Activated naive CD4-positive, alpha-beta T cell treated with anti-CD3 and anti-CD28 coated beads for 36 hours (primary cell): ENCODE measurements at regions of chr11 and their contacts with region 1.

Region 1: DNA sequence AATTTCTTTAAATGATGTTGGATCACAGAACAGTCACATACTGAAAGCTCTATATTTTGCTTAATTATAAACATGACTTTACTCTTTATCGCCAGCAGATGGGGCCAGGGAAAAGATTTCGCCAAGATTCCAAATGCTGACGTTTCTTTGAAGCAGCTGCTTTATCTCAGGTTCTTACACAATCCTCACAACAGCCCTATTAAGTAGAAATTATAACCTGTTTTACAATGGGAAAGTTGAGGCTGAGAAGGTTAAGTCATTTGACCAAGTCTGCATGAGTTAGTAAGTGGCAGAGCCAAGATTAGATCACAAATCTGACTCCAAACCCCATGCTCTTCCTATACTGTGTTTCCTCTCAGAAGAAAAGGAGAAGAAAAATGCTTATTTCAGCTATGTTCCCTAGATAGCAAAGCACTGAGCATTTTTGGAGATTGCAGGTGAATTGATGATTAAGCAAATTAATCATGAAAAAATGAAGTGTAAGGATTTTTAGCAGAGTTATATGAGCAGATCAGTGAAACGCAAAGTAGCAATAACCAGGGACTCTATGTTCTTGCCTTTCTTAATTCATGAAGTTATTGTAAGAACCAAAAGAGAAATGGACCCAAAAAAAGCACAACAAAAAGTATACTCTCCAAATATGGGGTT is 79.0 kb downstream of the AASDHPPT start:
- DNase-seq: peak; percentile 20
- H3K4me3 Mint-ChIP-seq: no peak overlapping the region
- H3K27ac Mint-ChIP-seq: no peak overlapping the region
- H3K4me1 Mint-ChIP-seq: no peaks in the 10 kb centered on the region
- H3K27me3 Mint-ChIP-seq: peaks cover 11% of the 10 kb centered on the region

Region 2: DNA sequence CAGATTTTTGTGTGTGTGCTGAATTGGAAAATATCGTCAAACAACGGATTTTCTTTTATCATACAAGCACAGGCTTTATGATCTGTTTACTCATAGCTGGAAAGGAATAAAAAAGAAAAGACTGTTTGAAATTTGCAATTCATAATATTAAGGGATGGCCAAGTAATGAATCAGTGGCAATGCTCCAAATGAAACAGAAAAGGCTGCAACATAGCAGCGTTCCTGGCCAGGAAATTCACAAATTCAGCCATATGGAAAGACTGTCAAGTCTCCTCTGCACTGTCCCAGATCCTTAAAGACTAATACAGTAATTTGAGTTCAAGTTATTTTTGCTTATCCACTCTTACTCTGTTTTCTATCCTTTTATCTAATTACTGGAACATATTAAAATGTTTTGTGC is 232.6 kb before region 1 on chr11:
- CTCF ChIA-PET with region 1: no interaction called
- intact Hi-C with region 1: no loop called
- DNase-seq: no peak
- H3K4me3 Mint-ChIP-seq: no peak overlapping the region
- H3K27ac Mint-ChIP-seq: no peak overlapping the region
- H3K4me1 Mint-ChIP-seq: no peaks in the 10 kb centered on the region
- H3K27me3 Mint-ChIP-seq: peaks cover 2% of the 10 kb centered on the region

Region 3: DNA sequence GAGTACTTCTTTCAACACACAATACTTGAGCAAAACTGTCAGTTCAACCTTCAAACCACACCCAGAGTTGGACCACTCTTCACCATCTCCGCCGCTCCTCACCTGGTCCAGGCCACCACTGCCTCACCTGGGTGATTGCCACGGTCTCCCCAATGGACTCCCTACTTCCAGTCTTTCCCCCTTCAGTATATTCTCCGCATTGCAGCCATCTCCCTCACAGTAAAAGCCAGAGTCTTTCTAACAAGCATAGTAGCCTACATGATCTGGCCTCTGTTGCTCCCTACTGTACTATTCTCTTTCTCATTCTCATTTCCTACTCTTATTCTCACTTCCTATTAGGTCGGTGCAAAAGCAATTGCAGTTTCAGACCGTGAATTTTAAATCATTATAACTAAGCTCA is 50.4 kb before region 1 on chr11:
- CTCF ChIA-PET with region 1: no interaction called
- intact Hi-C with region 1: no loop called
- DNase-seq: no peak
- H3K4me3 Mint-ChIP-seq: no peak overlapping the region
- H3K27ac Mint-ChIP-seq: no peak overlapping the region
- H3K4me1 Mint-ChIP-seq: no peaks in the 10 kb centered on the region
- H3K27me3 Mint-ChIP-seq: peaks cover 3% of the 10 kb centered on the region

Region 4: GRCh38 chr11:106172378-106172991 is 16.1 kb after region 1 on chr11:
- CTCF ChIA-PET with region 1: no interaction called
- intact Hi-C with region 1: no loop called
- DNase-seq: no peak
- H3K4me3 Mint-ChIP-seq: no peak overlapping the region
- H3K27ac Mint-ChIP-seq: no peak overlapping the region
- H3K4me1 Mint-ChIP-seq: no peaks in the 10 kb centered on the region
- H3K27me3 Mint-ChIP-seq: peaks cover 6% of the 10 kb centered on the region

Region 5: DNA sequence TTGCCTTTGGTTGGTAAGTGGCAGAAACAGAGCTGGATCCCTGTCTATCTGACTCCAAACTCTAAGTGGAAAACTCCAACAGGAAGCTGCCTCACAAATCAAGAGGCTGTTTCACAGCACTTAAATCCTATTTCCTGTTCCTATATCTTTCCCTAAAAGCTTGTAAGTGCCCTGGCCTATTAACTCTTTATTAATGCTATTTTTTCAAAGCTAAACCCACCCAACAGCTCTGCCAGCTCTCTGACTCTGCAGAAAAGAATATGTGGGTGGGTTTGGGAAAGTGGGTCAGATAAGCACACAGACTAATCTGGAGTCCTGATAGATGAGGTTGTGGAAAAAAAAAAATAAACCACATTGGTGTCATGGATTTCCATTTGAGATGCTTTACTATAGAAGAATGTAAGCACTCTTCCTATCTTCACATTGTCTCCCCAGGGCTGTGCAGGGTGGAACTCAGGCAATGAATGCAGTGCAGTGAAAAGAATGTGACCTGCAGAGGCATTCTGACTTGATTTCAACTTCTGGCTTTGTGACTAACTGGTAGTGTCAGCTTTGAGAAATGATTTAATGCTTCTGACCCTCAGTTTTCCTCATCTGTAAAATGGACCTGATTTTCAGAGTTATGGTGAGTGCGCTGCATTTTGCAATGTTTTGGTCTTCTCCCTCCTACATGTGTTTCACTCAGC is 46.7 kb after region 1 on chr11:
- CTCF ChIA-PET with region 1: no interaction called
- intact Hi-C with region 1: no loop called
- DNase-seq: no peak
- H3K4me3 Mint-ChIP-seq: no peak overlapping the region
- H3K27ac Mint-ChIP-seq: no peak overlapping the region
- H3K4me1 Mint-ChIP-seq: no peaks in the 10 kb centered on the region
- H3K27me3 Mint-ChIP-seq: no peaks in the 10 kb centered on the region

Region 6: GRCh38 chr11:107017433-107018227 is 861.2 kb after region 1 on chr11:
- CTCF ChIA-PET with region 1: no interaction called
- intact Hi-C with region 1: loop called (anchors 5 kb)
- DNase-seq: peak; percentile 16
- H3K4me3 Mint-ChIP-seq: peak overlapping the region; percentile 24
- H3K27ac Mint-ChIP-seq: no peak overlapping the region
- H3K4me1 Mint-ChIP-seq: peaks cover 4% of the 10 kb centered on the region
- H3K27me3 Mint-ChIP-seq: peaks cover 47% of the 10 kb centered on the region

Region 7: DNA sequence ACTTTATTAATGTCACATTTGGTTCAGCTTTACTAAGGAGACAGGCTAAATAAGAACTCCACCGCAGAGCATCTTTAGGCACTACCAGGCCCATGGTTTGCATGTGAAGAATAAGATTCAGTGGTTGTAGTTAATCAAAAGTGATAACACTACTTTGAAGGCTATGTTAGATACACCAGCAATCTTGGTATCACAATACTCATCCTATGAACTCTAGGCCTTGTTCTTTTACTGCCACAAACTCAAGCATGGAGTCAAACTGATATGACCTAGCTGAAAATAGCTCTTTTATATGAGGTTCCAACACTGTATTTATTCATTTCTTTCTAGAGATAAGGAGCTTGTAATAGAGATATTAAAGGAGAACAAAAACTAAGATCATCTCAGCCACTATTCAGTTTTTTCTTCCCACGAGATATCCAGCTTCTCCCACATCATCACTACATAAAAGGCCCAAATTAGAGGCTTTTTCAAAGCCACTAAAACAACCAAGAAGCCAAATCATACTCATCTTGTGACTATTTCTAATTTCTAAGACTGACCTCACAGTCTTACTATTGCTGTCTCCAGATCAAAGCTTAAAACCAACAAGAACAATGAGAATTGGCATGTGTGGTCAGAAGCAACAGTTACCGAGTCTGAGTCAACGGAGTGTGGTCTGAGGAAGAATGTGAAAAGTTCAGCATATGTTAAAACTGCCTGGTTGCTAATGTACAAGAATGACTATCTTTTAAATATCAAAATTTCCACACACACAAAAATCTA is 887.0 kb after region 1 on chr11:
- CTCF ChIA-PET with region 1: no interaction called
- intact Hi-C with region 1: loop called (anchors 5 kb)
- DNase-seq: no peak
- H3K4me3 Mint-ChIP-seq: no peak overlapping the region
- H3K27ac Mint-ChIP-seq: no peak overlapping the region
- H3K4me1 Mint-ChIP-seq: no peaks in the 10 kb centered on the region
- H3K27me3 Mint-ChIP-seq: no peaks in the 10 kb centered on the region